ENCODE measurements at regions of chr16 and their contacts with region 1.

Region 1: GRCh38 chr16:11535471-11535870 is 51.2 kb downstream of the LITAF start:
- DNase-seq: no peak
- ATAC-seq: no peak
- H3K4me3 ChIP-seq: no peak overlapping the region
- H3K4me3 Mint-ChIP-seq: no peak overlapping the region
- H3K27ac ChIP-seq: no peak overlapping the region
- H3K27ac Mint-ChIP-seq: peak overlapping the region in 1 of 9 donors; percentile 26
- H3K4me1 ChIP-seq: peaks cover 4 to 10% of the 10 kb centered on the region in 2 donors
- H3K4me1 Mint-ChIP-seq: peaks cover 8 to 23% (median 19%) of the 10 kb centered on the region in 7 donors
- H3K27me3 ChIP-seq: no peaks in the 10 kb centered on the region
- H3K27me3 Mint-ChIP-seq: peaks cover 0 to 4% (median 0%) of the 10 kb centered on the region in 5 donors

Region 2: GRCh38 chr16:11396241-11397048 is 139.0 kb before region 1 on chr16:
- CTCF ChIA-PET with region 1: interaction called, 3 read pairs
- POLR2A ChIA-PET with region 1: no interaction called
- intact Hi-C with region 1: loop called in 1 of 2 experiments (anchors 1 kb)
- DNase-seq: peak; percentile 32 to 77 (median 58)
- ATAC-seq: peak; percentile 80
- H3K4me3 ChIP-seq: no peak overlapping the region
- H3K4me3 Mint-ChIP-seq: no peak overlapping the region
- H3K27ac ChIP-seq: no peak overlapping the region
- H3K27ac Mint-ChIP-seq: no peak overlapping the region
- H3K4me1 ChIP-seq: peaks cover 0 to 3% of the 10 kb centered on the region in 2 donors
- H3K4me1 Mint-ChIP-seq: peaks cover 0 to 5% (median 2%) of the 10 kb centered on the region in 7 donors
- H3K27me3 ChIP-seq: no peaks in the 10 kb centered on the region
- H3K27me3 Mint-ChIP-seq: no peaks in the 10 kb centered on the region

Region 3: DNA sequence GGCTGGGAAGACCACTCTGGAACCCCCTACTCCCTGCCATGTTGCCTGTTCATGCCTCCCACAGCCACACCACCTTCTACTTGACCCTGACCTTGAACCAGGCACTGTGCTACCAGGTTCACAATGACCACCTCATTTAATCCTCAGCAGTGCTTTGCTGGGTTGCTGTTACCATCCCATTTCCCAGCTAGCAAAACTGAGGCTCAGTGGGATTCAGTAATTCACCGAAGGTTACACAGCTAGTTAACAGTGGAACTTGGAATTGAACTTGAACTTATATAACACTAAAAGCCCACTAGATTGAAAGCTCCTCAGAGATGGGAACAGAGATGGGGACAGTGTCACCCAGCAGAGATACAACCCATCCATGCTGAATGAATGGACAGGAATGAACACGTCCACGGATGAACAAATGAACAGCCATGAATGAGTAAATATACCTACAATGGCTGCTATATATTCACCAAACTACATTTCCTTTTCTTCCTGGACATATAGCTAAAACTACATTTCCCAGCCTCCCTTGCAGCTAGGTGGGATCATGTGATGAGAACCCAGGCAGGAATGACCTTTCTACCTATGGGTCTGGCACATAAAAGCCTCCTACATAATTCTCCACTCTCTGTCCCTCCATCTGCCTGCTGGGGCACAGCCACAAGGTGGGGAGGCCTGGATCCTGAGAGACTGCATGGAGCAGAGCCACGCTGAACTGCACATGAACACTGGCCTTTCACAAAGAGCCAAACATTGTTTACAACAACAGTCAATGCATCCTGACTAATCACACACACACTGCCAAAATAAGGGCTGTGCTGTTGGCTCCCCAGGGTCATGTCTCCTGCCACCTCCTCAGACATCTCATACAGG is 95.4 kb before region 1 on chr16:
- CTCF ChIA-PET with region 1: no interaction called
- POLR2A ChIA-PET with region 1: no interaction called
- intact Hi-C with region 1: no loop called
- DNase-seq: no peak
- ATAC-seq: no peak
- H3K4me3 ChIP-seq: no peak overlapping the region
- H3K4me3 Mint-ChIP-seq: no peak overlapping the region
- H3K27ac ChIP-seq: no peak overlapping the region
- H3K27ac Mint-ChIP-seq: no peak overlapping the region
- H3K4me1 ChIP-seq: no peaks in the 10 kb centered on the region
- H3K4me1 Mint-ChIP-seq: no peaks in the 10 kb centered on the region
- H3K27me3 ChIP-seq: no peaks in the 10 kb centered on the region
- H3K27me3 Mint-ChIP-seq: no peaks in the 10 kb centered on the region

Region 4: DNA sequence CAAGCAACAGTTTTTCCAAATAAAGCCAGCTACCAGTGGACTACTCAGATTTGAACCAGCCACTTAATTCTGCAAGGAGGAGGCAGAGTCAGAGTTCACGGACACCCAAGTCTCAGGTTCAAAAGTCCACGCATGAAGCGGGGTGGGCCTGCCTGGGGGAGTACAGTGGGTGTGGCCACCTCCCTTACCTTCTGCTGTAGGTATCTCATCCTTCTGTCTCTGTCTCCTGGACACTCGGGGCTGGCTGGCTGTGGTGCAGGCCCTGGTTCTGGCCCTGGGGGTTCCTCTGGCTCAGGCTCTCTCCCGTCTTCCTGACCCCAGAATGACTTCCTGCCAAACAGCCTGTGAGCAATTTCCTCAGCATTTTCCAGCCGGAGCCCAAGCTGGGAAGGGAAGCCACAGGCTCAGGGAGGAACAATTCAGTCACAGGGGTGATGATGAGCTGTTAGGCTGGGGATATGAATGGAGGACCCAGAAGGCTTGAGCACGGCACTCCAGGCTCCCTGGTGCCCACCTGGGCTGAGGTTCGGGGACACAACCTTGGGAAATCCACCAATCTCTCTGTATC is 50.7 kb before region 1 on chr16:
- CTCF ChIA-PET with region 1: no interaction called
- POLR2A ChIA-PET with region 1: no interaction called
- intact Hi-C with region 1: loop called in 1 of 2 experiments (anchors 5 kb)
- DNase-seq: no peak
- ATAC-seq: no peak
- H3K4me3 ChIP-seq: no peak overlapping the region
- H3K4me3 Mint-ChIP-seq: no peak overlapping the region
- H3K27ac ChIP-seq: no peak overlapping the region
- H3K27ac Mint-ChIP-seq: no peak overlapping the region
- H3K4me1 ChIP-seq: no peaks in the 10 kb centered on the region
- H3K4me1 Mint-ChIP-seq: no peaks in the 10 kb centered on the region
- H3K27me3 ChIP-seq: no peaks in the 10 kb centered on the region
- H3K27me3 Mint-ChIP-seq: no peaks in the 10 kb centered on the region

Region 5: DNA sequence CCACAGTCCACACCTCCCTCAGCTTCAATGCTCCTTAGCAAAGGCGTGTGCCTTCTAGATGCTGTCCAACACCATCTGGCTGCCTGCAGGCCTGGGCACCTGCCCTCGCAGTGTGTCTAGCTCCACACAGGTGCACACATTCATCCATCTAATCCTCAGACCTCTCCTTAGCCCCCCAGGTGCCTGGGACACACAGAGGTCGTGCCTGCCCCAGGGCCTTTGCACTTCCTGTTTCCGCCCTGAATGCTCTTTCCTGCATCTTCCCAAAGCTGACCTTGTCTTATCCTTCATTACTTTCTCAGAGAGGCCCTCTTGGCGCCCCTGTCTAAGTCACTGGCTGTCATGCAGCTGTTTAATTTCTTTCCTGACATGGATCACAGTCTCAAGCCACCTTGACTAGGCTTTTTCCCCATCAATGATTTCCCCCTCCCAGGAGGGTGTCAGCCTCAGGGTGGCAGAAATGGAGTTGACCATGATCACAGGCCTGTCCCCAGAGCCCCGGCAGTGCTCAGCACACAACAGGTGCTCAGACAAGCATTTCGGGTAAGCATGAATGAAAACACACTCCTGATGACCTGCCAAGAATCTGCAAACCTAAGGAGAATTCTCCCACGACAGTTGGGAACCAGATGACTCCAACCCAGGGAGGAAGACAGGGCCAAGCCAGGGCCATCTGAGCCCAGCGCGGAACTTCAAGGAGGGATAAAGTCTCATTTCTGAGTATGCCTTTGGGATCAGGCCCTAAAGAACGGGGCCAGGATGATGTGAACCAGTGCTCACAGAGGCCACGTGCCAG is 25.1 kb before region 1 on chr16:
- CTCF ChIA-PET with region 1: no interaction called
- POLR2A ChIA-PET with region 1: no interaction called
- intact Hi-C with region 1: no loop called
- DNase-seq: no peak
- ATAC-seq: no peak
- H3K4me3 ChIP-seq: no peak overlapping the region
- H3K4me3 Mint-ChIP-seq: no peak overlapping the region
- H3K27ac ChIP-seq: no peak overlapping the region
- H3K27ac Mint-ChIP-seq: no peak overlapping the region
- H3K4me1 ChIP-seq: no peaks in the 10 kb centered on the region
- H3K4me1 Mint-ChIP-seq: no peaks in the 10 kb centered on the region
- H3K27me3 ChIP-seq: no peaks in the 10 kb centered on the region
- H3K27me3 Mint-ChIP-seq: no peaks in the 10 kb centered on the region

Region 6: DNA sequence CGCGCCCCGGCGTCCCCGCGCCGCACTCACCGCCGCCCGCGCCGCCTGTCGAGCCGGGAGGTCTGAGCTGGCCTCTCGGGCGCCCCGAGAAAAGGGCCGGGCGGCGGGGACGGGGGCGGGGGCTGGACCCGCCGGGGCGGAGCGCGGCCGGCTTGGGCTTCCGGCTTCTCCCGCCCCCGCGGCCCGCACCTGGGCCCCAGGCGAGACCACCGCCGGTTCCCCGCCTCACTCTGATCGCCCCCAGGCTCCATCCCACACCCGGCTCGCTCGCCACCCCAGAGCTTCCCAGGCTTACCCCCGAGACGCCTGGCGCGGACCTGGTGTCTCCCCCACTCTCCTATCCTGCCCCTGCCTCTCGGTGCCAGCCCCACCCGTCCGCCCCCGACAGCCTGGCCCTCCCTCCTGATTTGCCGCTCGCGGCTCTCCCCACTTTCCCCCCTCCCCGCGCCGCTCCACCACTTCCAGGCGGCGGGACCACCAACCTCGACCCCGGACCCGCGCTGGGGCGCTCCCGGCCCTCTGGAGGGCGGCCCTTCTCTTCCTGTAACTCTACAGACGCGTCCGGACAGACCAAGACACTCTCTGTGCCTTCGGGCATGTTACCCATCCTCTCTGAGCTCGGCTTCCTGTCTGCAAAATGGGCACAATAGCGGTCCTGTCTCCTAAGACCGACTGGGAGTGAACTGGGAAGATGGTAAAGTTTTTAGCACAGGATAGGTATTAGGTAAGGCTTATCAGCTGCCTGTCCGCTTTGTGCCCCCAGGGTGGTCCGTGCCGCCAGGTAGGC is 51.6 kb after region 1 on chr16 and contains the start of gene LITAF:
- CTCF ChIA-PET with region 1: interaction called, 21 read pairs
- POLR2A ChIA-PET with region 1: no interaction called
- intact Hi-C with region 1: loop called (anchors 1 to 2 kb)
- DNase-seq: peak in 8 of 9 donors; percentile 52 to 75 (median 57)
- ATAC-seq: peak; percentile 71
- H3K4me3 ChIP-seq: peak within 1 kb of the TSS; percentile 88
- H3K4me3 Mint-ChIP-seq: peak within 1 kb of the TSS; percentile 91 to 100 (median 96)
- H3K27ac ChIP-seq: peak within 1 kb of the TSS; percentile 94
- H3K27ac Mint-ChIP-seq: peak within 1 kb of the TSS; percentile 90 to 99 (median 97)
- H3K4me1 ChIP-seq: peaks cover 32 to 38% of the 10 kb centered on the region in 2 donors
- H3K4me1 Mint-ChIP-seq: peaks cover 29 to 45% (median 37%) of the 10 kb centered on the region in 7 donors
- H3K27me3 ChIP-seq: no peaks in the 10 kb centered on the region
- H3K27me3 Mint-ChIP-seq: peaks cover 0 to 7% (median 0%) of the 10 kb centered on the region in 5 donors
- total RNA-seq, gene LITAF: 126 to 278 (median 208) TPM

Region 7: GRCh38 chr16:11639925-11640899 is 104.7 kb after region 1 on chr16:
- CTCF ChIA-PET with region 1: interaction called, 70 read pairs
- POLR2A ChIA-PET with region 1: interaction called, 4 read pairs
- intact Hi-C with region 1: loop called (anchors 1 kb)
- DNase-seq: no peak
- ATAC-seq: peak; percentile 89
- H3K4me3 ChIP-seq: no peak overlapping the region
- H3K4me3 Mint-ChIP-seq: peak overlapping the region in 2 of 10 donors; percentile 28 to 63
- H3K27ac ChIP-seq: no peak overlapping the region
- H3K27ac Mint-ChIP-seq: peak overlapping the region in 5 of 9 donors; percentile 14 to 82 (median 49)
- H3K4me1 ChIP-seq: peaks cover 11 to 14% of the 10 kb centered on the region in 2 donors
- H3K4me1 Mint-ChIP-seq: peaks cover 15 to 34% (median 22%) of the 10 kb centered on the region in 7 donors
- H3K27me3 ChIP-seq: no peaks in the 10 kb centered on the region
- H3K27me3 Mint-ChIP-seq: peaks cover 0 to 29% (median 0%) of the 10 kb centered on the region in 5 donors

Region 8: GRCh38 chr16:11742539-11743307 is 207.3 kb after region 1 on chr16 and contains the start of gene TXNDC11:
- CTCF ChIA-PET with region 1: no interaction called
- POLR2A ChIA-PET with region 1: no interaction called
- intact Hi-C with region 1: loop called in 1 of 2 experiments (anchors 1 kb)
- DNase-seq: peak; percentile 98 to 100 (median 100)
- ATAC-seq: peak; percentile 98
- H3K4me3 ChIP-seq: peak within 1 kb of the TSS; percentile 92
- H3K4me3 Mint-ChIP-seq: peak within 1 kb of the TSS; percentile 91 to 98 (median 94)
- H3K27ac ChIP-seq: peak within 1 kb of the TSS; percentile 90
- H3K27ac Mint-ChIP-seq: peak within 1 kb of the TSS; percentile 91 to 99 (median 98)
- H3K4me1 ChIP-seq: peaks cover 26 to 28% of the 10 kb centered on the region in 2 donors
- H3K4me1 Mint-ChIP-seq: peaks cover 39 to 55% (median 51%) of the 10 kb centered on the region in 7 donors
- H3K27me3 ChIP-seq: no peaks in the 10 kb centered on the region
- H3K27me3 Mint-ChIP-seq: no peaks in the 10 kb centered on the region
- total RNA-seq, gene TXNDC11: 41.2 to 80.5 (median 55.1) TPM

Region 9: GRCh38 chr16:11783319-11784037 is 248.0 kb after region 1 on chr16:
- CTCF ChIA-PET with region 1: no interaction called
- POLR2A ChIA-PET with region 1: no interaction called
- intact Hi-C with region 1: no loop called
- DNase-seq: peak; percentile 31 to 89 (median 82)
- ATAC-seq: peak; percentile 90
- H3K4me3 ChIP-seq: peak overlapping the region; percentile 52
- H3K4me3 Mint-ChIP-seq: peak overlapping the region; percentile 79 to 92 (median 85)
- H3K27ac ChIP-seq: peak overlapping the region; percentile 96
- H3K27ac Mint-ChIP-seq: peak overlapping the region; percentile 95 to 99 (median 99)
- H3K4me1 ChIP-seq: peaks cover 33 to 49% of the 10 kb centered on the region in 2 donors
- H3K4me1 Mint-ChIP-seq: peaks cover 41 to 68% (median 62%) of the 10 kb centered on the region in 7 donors
- H3K27me3 ChIP-seq: no peaks in the 10 kb centered on the region
- H3K27me3 Mint-ChIP-seq: no peaks in the 10 kb centered on the region

Measured in naive thymus-derived CD4-positive, alpha-beta T cell (primary cell).